B cell (primary cell): ENCODE measurements at regions of chr16 and their contacts with region 1.

Region 1: GRCh38 chr16:71808593-71809459 is at the start of gene AP1G1:
- DNase-seq: peak; percentile 99
- ATAC-seq: peak; percentile 89
- H3K4me3 ChIP-seq: peak within 1 kb of the TSS; percentile 87 to 99 (median 96)
- H3K4me3 Mint-ChIP-seq: peak within 1 kb of the TSS; percentile 99
- H3K27ac ChIP-seq: peak within 1 kb of the TSS; percentile 96 to 99
- H3K27ac Mint-ChIP-seq: peak within 1 kb of the TSS; percentile 100
- H3K4me1 ChIP-seq: peaks cover 20 to 27% of the 10 kb centered on the region in 2 donors
- H3K4me1 Mint-ChIP-seq: peaks cover 30% of the 10 kb centered on the region
- H3K27me3 ChIP-seq: no peaks in the 10 kb centered on the region
- H3K27me3 Mint-ChIP-seq: no peaks in the 10 kb centered on the region
- CTCF ChIP-seq: no peak
- total RNA-seq, gene AP1G1: 142 and 159 TPM in 2 replicates

Region 2: GRCh38 chr16:71845639-71846430 is 37.0 kb after region 1 on chr16 and contains the start of gene ATXN1L:
- CTCF ChIA-PET with region 1: interaction called, 4 read pairs
- POLR2A ChIA-PET with region 1: interaction called, 13 read pairs
- intact Hi-C with region 1: loop called (anchors 1 kb)
- DNase-seq: peak; percentile 95
- ATAC-seq: peak; percentile 87
- H3K4me3 ChIP-seq: peak within 1 kb of the TSS; percentile 63 to 99 (median 92)
- H3K4me3 Mint-ChIP-seq: peak within 1 kb of the TSS; percentile 92
- H3K27ac ChIP-seq: peak within 1 kb of the TSS; percentile 94 to 95
- H3K27ac Mint-ChIP-seq: peak within 1 kb of the TSS; percentile 98
- H3K4me1 ChIP-seq: peaks cover 29 to 52% of the 10 kb centered on the region in 2 donors
- H3K4me1 Mint-ChIP-seq: peaks cover 50% of the 10 kb centered on the region
- H3K27me3 ChIP-seq: no peaks in the 10 kb centered on the region
- H3K27me3 Mint-ChIP-seq: no peaks in the 10 kb centered on the region
- CTCF ChIP-seq: no peak
- total RNA-seq, gene ATXN1L: 38.4 and 39.5 TPM in 2 replicates